Right cardiac atrium (tissue), 5 donors: ENCODE measurements at regions of chr10 and their contacts with region 1.

Region 1: DNA sequence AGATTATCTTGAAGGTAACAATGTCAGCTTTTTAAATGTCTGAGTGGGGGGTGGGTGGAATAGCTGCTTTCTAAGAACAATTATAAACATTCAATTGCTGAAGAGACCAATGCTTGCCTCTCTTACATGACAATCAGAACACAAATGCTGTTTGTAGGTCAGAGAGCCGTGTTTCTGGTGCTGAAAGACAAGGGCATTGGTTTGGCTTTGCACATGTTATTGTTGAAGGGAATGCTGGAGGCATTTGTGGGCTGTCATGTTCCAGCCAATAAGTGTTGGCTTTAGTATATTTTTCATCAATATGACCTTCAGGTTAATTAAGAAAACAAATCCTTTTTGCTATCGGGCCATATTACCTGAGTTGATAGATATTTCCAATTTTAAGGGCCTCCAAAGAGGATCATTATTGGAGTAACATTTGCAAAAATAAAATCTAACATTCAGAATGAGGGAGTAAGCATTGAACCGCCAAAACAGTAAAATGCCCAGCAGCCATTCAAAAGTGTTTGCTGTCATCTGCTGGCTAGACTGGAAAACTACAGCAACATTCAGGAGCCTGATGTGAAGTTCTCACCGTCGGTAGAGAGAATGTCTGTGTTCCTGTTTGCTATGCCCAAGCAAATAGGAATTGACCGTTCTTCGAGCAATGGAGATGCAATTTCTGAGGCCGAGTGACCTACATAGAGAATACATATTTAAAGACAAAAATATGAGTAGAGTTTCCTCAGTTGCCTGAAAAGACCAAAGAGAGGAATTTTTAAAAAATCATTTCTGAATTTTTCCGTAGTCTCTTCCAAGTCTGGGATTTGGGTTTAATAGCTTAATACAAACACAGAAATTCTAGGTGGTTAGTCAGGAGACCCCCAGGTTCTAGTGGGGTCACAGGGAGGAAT is 118.9 kb downstream of the APBB1IP start:
- DNase-seq: no peak
- ATAC-seq: peak; percentile 75 to 79
- H3K4me3 ChIP-seq: no peak overlapping the region
- H3K27ac ChIP-seq: no peak overlapping the region
- H3K4me1 ChIP-seq: no peaks in the 10 kb centered on the region
- H3K27me3 ChIP-seq: no peaks in the 10 kb centered on the region

Region 2: DNA sequence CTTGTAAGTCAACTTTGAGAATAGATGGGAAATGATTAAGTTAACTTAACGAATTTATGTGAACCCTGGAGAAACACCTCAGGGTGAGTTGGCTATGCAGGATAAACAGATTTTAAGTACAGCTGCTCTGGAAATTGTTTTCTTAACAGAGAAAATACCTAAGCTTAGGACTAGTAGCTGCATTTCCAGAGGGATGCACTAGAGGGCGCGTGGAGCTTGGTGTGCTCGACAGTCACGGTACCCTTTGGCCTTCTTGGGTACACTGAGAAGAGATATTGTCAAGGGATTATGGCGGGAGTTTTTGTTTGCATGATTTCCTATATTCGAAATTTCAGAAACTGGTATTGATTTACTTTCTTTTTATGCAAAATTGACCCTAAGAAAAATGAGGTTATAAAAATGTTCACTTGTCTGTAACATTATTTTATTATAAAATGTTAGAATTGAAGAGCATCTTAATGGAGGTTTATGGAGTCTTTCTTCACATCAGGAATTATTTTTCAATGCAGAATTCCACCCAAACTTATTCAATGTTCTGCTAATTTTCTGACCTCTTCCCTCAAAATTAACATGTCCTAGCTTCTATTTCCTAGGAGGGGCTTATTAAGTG is 681.3 kb before region 1 on chr10:
- intact Hi-C with region 1: loop called in 3 of 4 experiments (anchors 5 to 10 kb)
- DNase-seq: peak; percentile 66 to 83 (median 71)
- ATAC-seq: peak; percentile 57 to 62
- H3K4me3 ChIP-seq: no peak overlapping the region
- H3K27ac ChIP-seq: no peak overlapping the region
- H3K4me1 ChIP-seq: no peaks in the 10 kb centered on the region
- H3K27me3 ChIP-seq: no peaks in the 10 kb centered on the region

Region 3: DNA sequence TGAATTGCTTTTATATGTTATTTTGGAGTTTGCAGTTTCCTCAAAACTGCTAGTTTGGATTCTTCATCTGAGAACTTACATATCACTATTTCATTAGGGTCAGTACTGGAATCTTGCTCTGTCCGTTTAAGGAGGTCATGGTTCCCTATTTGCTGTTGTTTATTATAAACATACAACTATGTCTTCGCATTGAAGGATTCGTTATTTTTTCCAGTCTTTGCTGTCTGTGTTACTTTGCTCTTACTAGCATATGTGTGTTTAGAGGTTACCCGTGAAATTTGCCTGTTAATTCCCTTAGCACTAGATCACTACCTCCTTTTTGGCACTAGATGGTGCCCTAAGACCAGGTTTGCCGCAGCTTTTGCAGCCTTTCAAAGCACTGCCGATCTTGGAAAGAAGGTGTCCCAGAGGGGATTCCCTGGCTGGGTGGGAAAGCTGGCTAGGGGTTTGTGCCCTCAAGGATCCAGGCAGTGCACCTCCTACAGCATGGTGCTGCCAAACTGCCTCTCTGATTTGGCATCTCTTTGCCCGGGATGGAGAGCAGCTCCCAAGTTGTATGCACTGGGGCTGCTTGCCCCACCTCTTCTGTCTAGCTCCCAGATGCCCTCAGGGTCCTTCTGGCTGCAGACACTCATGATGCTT is 221.9 kb before region 1 on chr10:
- intact Hi-C with region 1: loop called (anchors 2 to 5 kb)
- DNase-seq: peak; percentile 38 to 61 (median 50)
- ATAC-seq: peak; percentile 66 to 75
- H3K4me3 ChIP-seq: no peak overlapping the region
- H3K27ac ChIP-seq: no peak overlapping the region
- H3K4me1 ChIP-seq: no peaks in the 10 kb centered on the region
- H3K27me3 ChIP-seq: no peaks in the 10 kb centered on the region